ENCODE measurements at regions of chr2 and their contacts with region 1.

Region 1: GRCh38 chr2:130371723-130372054 is 15.8 kb downstream of the PTPN18 start:
- DNase-seq: no peak
- H3K4me3 ChIP-seq: peak overlapping the region; percentile 57 to 79 (median 68)
- H3K27ac ChIP-seq: peak overlapping the region; percentile 84 to 92 (median 88)
- H3K4me1 ChIP-seq: peaks cover 10 to 38% (median 14%) of the 10 kb centered on the region in 4 donors
- H3K27me3 ChIP-seq: no peaks in the 10 kb centered on the region
- CTCF ChIP-seq: no peak
- EP300 ChIP-seq: no peak
- POLR2A ChIP-seq: no peak

Region 2: GRCh38 chr2:130288461-130289403 is 83.0 kb before region 1 on chr2:
- in situ Hi-C with region 1: no loop called
- intact Hi-C with region 1: no loop called
- DNase-seq: no peak
- H3K4me3 ChIP-seq: no peak overlapping the region
- H3K27ac ChIP-seq: no peak overlapping the region
- H3K4me1 ChIP-seq: peaks cover 0 to 5% (median 0%) of the 10 kb centered on the region in 4 donors
- H3K27me3 ChIP-seq: no peaks in the 10 kb centered on the region
- CTCF ChIP-seq: no peak
- EP300 ChIP-seq: no peak
- POLR2A ChIP-seq: no peak

Region 3: DNA sequence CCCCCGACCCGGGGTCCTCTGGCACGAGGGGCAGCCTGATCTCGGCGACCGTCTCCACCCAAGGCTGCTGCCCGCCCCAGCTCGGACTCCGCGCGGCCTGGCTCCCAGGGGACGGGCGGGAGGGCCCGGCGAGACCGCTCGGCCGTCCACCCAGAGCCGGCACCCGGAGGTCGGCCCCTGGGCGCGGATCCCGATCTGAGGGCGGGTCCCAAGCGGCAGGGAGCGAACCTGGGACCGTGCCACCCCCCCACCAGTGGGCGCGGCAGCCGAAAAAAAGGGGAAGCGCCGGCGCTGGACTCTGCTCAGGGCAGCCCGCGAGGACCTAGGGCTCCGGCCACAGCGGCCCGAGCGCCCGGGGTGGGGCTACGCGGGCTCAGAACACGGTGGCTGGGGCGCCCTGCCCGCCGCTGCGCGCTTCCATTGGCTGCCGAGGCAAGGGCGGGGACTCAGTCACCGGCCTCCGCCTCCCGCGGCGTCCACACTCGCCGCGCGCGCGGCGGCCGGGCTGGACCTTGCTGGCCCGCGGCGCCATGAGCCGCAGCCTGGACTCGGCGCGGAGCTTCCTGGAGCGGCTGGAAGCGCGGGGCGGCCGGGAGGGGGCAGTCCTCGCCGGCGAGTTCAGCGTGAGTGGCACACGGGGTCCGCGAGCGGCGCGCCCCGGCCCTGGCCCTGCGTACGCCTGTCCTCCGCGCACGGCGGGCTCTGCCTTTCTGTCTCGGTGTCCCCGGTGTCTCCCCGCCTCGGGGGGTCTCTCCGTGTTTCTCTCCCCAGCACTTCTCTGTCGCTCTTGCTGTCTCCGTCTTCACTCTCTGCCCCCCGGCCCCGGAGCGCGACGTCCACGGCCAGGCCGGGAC is 15.9 kb before region 1 on chr2 and contains the start of gene PTPN18:
- in situ Hi-C with region 1: no loop called
- intact Hi-C with region 1: loop called (anchors 1 kb)
- DNase-seq: peak; percentile 92
- H3K4me3 ChIP-seq: peak within 1 kb of the TSS; percentile 51 to 93 (median 82)
- H3K27ac ChIP-seq: peak within 1 kb of the TSS; percentile 87 to 88 (median 88)
- H3K4me1 ChIP-seq: peaks cover 6 to 21% (median 8%) of the 10 kb centered on the region in 4 donors
- H3K27me3 ChIP-seq: no peaks in the 10 kb centered on the region
- CTCF ChIP-seq: peak; percentile 23 to 58 (median 51)
- EP300 ChIP-seq: no peak
- POLR2A ChIP-seq: peak; percentile 67
- total RNA-seq, gene PTPN18: 136 to 168 (median 148) TPM